ENCODE measurements at regions of chr22 and their contacts with region 1.

Region 1: DNA sequence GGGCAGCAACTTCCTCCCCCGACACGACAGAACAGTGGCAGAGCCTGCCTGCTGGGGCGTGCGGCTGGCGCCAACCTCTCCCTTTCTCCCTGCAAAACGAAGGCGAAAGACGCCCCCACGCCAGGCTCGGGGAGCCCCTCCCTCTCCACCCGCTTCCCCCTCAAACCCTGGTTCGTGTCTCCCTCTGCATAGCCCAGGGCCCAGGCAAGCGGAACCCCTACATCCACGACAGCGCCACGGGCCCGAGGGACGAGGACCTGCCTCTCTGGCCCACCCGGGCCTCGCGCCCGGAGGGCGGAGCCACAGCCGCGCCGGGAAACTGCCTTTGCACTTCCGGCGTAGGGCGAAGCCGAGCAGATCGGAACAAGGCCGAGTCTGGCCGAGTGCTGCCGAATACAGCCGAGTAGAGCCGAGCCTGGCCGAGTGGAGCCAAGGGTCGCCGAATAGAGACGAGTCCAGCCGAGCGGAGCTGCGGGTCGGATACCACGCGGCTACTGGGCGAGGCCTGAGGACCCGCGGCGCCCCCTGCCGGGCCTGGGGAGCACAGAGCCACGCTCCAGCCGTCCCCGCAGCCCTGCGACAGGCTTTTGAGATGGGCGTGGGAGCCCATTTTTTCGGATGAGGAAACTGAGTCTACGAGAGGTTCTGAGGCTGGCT is 11.2 kb upstream of the C1QTNF6 start:
- DNase-seq: peak; percentile 99
- CTCF ChIP-seq: peak; percentile 94

Region 2: DNA sequence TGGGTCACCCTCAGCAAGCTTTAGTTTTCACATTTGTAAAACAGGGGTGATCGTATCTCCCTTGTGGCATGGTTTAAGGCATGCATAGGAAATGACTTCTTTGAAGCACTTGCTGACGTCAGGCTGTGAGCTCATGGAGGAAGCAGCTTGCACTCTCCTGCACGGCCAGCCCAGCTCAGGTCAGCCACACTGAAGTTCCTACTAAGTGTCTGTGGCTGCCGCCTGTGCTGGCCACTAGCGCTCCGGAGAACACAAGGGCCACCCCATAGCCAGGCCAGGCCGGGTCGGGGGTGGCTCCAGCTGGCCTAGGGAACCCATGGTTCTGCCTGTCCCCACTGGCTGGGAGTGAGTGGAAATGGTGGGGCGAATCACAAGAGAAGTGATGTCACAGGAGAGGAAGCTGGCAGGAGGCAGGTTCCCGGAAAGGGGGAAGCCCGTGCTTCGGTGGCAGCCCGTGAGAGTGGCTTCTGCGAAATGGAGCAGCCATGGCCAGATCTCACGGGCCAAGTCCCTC is 119.5 kb before region 1 on chr22:
- in situ Hi-C with region 1: loop called (anchors 10 kb)
- DNase-seq: no peak
- CTCF ChIP-seq: no peak

Region 3: GRCh38 chr22:37126882-37127281 is 72.3 kb before region 1 on chr22:
- in situ Hi-C with region 1: no loop called
- DNase-seq: no peak
- CTCF ChIP-seq: peak; percentile 48

Region 4: DNA sequence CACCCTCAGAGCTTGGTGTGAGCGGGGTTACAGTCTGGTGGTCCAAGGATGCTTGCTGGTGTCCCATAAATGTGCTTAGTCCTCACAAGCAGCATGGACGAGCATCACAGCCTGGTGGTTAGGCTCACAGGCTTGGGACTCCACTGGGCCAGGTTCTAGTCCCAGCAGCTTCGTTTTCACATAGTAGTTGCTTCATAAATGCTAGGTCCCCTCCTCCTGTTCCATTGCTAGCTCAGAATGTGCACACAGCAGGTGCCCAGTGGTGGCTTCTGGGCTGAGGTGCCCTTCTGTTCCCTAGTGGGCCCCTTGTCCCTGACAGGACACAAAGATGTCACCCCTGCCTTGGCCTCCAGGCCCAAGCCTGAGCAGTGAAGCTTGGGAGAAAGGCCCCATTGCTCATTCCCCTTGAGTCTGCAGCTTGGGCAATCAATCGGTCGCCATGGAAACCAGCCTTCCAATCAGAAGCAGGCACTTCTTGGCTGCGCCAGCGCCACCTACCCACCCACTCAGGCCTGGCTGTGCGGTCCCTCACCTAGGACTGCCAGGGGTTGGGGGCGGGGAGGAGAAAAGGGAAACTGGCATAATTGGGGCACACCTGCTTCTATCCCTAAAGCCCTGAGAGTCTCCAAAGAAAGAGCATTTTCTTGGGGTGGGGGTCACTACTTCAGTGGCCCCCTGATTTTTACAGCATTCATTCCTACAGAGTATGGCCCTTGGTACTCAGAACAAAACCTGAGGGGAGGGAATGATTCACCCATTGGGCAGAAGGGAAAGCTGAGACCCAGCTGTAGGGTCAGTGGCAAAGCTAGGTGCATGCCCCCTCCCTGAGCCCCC is 131.2 kb after region 1 on chr22:
- in situ Hi-C with region 1: no loop called
- DNase-seq: peak; percentile 73
- CTCF ChIP-seq: peak; percentile 26